B cell (primary cell): ENCODE measurements at regions of chr12 and their contacts with region 1.

Region 1: DNA sequence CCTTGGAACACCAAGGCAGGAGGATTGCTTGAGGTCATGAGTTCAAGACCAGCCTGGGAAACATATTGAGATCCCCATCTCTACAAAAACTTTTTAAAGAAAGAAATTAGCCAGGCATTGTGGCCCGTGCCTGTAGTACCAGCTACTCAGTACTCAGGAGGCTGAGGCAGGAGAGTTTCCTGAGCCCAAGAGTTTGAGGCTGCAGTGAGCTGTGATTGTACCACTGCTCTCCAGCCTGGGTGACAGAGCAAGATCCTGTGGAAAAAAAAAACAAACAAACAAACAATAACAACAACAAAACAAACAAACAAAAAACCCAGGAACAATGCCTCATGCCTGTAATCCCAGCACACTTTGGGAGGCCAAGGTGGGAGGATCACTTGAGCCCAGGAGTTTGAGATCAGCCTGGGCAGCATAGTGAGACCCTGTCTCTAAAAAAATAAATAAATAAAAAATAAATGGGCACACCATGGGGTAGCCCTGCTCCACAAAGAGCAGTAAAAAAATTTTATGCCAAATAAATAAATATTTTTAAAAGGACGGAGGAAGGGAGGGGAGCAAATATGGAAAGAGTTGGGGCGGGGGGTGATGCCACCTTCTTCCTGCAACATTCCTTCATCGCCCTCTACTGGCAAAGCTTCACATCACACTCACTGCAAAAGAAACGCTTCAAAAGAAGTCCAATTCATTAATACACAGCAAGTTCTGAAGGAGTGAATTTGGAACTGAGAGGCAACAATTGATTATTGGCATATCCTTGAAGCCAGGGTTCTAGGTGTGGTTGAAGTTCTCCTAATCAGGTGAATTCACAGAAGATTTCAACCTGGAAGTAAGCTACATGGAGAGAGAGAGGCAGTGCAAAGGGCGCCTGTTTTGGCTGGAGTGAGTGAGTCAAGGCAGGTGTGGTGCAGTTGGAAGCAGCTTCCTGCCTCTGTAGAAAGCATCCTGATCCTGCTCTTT is 8.8 kb upstream of the GNPTAB start:
- DNase-seq: peak; percentile 80
- ATAC-seq: peak; percentile 72
- H3K4me3 ChIP-seq: no peak overlapping the region
- H3K4me3 Mint-ChIP-seq: no peak overlapping the region
- H3K27ac ChIP-seq: peak overlapping the region in 1 of 2 donors; percentile 59
- H3K27ac Mint-ChIP-seq: no peak overlapping the region
- H3K4me1 ChIP-seq: peaks cover 17 to 18% of the 10 kb centered on the region in 2 donors
- H3K4me1 Mint-ChIP-seq: peaks cover 19% of the 10 kb centered on the region
- H3K27me3 ChIP-seq: no peaks in the 10 kb centered on the region
- H3K27me3 Mint-ChIP-seq: no peaks in the 10 kb centered on the region
- CTCF ChIP-seq: peak; percentile 93

Region 2: GRCh38 chr12:101414533-101415119 is 425.0 kb before region 1 on chr12:
- CTCF ChIA-PET with region 1: interaction called, 47 read pairs
- POLR2A ChIA-PET with region 1: no interaction called
- intact Hi-C with region 1: loop called (anchors 1 kb)
- DNase-seq: peak; percentile 52
- ATAC-seq: no peak
- H3K4me3 ChIP-seq: no peak overlapping the region
- H3K4me3 Mint-ChIP-seq: no peak overlapping the region
- H3K27ac ChIP-seq: no peak overlapping the region
- H3K27ac Mint-ChIP-seq: no peak overlapping the region
- H3K4me1 ChIP-seq: no peaks in the 10 kb centered on the region
- H3K4me1 Mint-ChIP-seq: no peaks in the 10 kb centered on the region
- H3K27me3 ChIP-seq: peaks cover 0 to 3% (median 0%) of the 10 kb centered on the region in 4 experiments
- H3K27me3 Mint-ChIP-seq: peaks cover 5% of the 10 kb centered on the region
- CTCF ChIP-seq: peak; percentile 79

Region 3: DNA sequence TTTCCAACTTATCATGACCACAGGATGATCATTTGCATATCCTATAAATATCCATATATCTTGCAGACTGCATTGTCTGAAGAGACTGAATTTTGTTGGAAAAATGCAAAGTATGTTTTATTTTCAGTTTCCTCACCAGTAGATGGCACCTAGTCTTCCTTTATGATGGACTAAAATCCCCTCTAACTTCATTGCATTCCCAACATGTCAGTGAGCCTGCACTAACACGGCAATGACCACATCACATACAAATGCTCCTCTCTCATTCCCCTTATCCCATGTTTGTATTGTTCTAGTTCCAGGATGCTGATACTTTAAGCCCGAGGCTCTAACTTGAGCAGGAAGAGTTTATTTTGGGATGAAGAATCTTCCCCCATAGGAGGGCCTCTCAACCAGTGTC is 269.6 kb before region 1 on chr12:
- CTCF ChIA-PET with region 1: interaction called, 15 read pairs
- POLR2A ChIA-PET with region 1: no interaction called
- intact Hi-C with region 1: loop called (anchors 1 kb)
- DNase-seq: peak; percentile 53
- ATAC-seq: peak; percentile 33
- H3K4me3 ChIP-seq: peak overlapping the region in 1 of 5 experiments; percentile 22
- H3K4me3 Mint-ChIP-seq: peak overlapping the region; percentile 20
- H3K27ac ChIP-seq: no peak overlapping the region
- H3K27ac Mint-ChIP-seq: no peak overlapping the region
- H3K4me1 ChIP-seq: peaks cover 4 to 7% of the 10 kb centered on the region in 2 donors
- H3K4me1 Mint-ChIP-seq: peaks cover 4% of the 10 kb centered on the region
- H3K27me3 ChIP-seq: peaks cover 0 to 3% (median 0%) of the 10 kb centered on the region in 4 experiments
- H3K27me3 Mint-ChIP-seq: peaks cover 3% of the 10 kb centered on the region
- CTCF ChIP-seq: peak; percentile 59

Region 4: GRCh38 chr12:101759396-101760047 is 80.1 kb before region 1 on chr12:
- CTCF ChIA-PET with region 1: interaction called, 21 read pairs
- POLR2A ChIA-PET with region 1: no interaction called
- intact Hi-C with region 1: no loop called
- DNase-seq: peak; percentile 62
- ATAC-seq: peak; percentile 72
- H3K4me3 ChIP-seq: no peak overlapping the region
- H3K4me3 Mint-ChIP-seq: no peak overlapping the region
- H3K27ac ChIP-seq: no peak overlapping the region
- H3K27ac Mint-ChIP-seq: no peak overlapping the region
- H3K4me1 ChIP-seq: peaks cover 3% of the 10 kb centered on the region in 2 donors
- H3K4me1 Mint-ChIP-seq: peaks cover 20% of the 10 kb centered on the region
- H3K27me3 ChIP-seq: no peaks in the 10 kb centered on the region
- H3K27me3 Mint-ChIP-seq: no peaks in the 10 kb centered on the region
- CTCF ChIP-seq: peak; percentile 89

Region 5: GRCh38 chr12:101780599-101780998 is 59.0 kb before region 1 on chr12:
- CTCF ChIA-PET with region 1: interaction called, 31 read pairs
- POLR2A ChIA-PET with region 1: no interaction called
- intact Hi-C with region 1: no loop called
- DNase-seq: no peak
- ATAC-seq: no peak
- H3K4me3 ChIP-seq: no peak overlapping the region
- H3K4me3 Mint-ChIP-seq: no peak overlapping the region
- H3K27ac ChIP-seq: no peak overlapping the region
- H3K27ac Mint-ChIP-seq: peak overlapping the region; percentile 64
- H3K4me1 ChIP-seq: peaks cover 5 to 7% of the 10 kb centered on the region in 2 donors
- H3K4me1 Mint-ChIP-seq: peaks cover 18% of the 10 kb centered on the region
- H3K27me3 ChIP-seq: no peaks in the 10 kb centered on the region
- H3K27me3 Mint-ChIP-seq: no peaks in the 10 kb centered on the region
- CTCF ChIP-seq: no peak

Region 6: GRCh38 chr12:101854747-101855146 is 15.1 kb after region 1 on chr12:
- CTCF ChIA-PET with region 1: interaction called, 10 read pairs
- POLR2A ChIA-PET with region 1: no interaction called
- intact Hi-C with region 1: no loop called
- DNase-seq: peak; percentile 50
- ATAC-seq: peak; percentile 76
- H3K4me3 ChIP-seq: no peak overlapping the region
- H3K4me3 Mint-ChIP-seq: no peak overlapping the region
- H3K27ac ChIP-seq: no peak overlapping the region
- H3K27ac Mint-ChIP-seq: no peak overlapping the region
- H3K4me1 ChIP-seq: peaks cover 16% of the 10 kb centered on the region in 2 donors
- H3K4me1 Mint-ChIP-seq: peaks cover 36% of the 10 kb centered on the region
- H3K27me3 ChIP-seq: no peaks in the 10 kb centered on the region
- H3K27me3 Mint-ChIP-seq: no peaks in the 10 kb centered on the region
- CTCF ChIP-seq: no peak

Region 7: GRCh38 chr12:101945369-101946231 is 106.0 kb after region 1 on chr12:
- CTCF ChIA-PET with region 1: no interaction called
- POLR2A ChIA-PET with region 1: no interaction called
- intact Hi-C with region 1: no loop called
- DNase-seq: no peak
- ATAC-seq: no peak
- H3K4me3 ChIP-seq: no peak overlapping the region
- H3K4me3 Mint-ChIP-seq: no peak overlapping the region
- H3K27ac ChIP-seq: no peak overlapping the region
- H3K27ac Mint-ChIP-seq: no peak overlapping the region
- H3K4me1 ChIP-seq: peaks cover 17 to 18% of the 10 kb centered on the region in 2 donors
- H3K4me1 Mint-ChIP-seq: peaks cover 16% of the 10 kb centered on the region
- H3K27me3 ChIP-seq: no peaks in the 10 kb centered on the region
- H3K27me3 Mint-ChIP-seq: no peaks in the 10 kb centered on the region
- CTCF ChIP-seq: no peak

Region 8: DNA sequence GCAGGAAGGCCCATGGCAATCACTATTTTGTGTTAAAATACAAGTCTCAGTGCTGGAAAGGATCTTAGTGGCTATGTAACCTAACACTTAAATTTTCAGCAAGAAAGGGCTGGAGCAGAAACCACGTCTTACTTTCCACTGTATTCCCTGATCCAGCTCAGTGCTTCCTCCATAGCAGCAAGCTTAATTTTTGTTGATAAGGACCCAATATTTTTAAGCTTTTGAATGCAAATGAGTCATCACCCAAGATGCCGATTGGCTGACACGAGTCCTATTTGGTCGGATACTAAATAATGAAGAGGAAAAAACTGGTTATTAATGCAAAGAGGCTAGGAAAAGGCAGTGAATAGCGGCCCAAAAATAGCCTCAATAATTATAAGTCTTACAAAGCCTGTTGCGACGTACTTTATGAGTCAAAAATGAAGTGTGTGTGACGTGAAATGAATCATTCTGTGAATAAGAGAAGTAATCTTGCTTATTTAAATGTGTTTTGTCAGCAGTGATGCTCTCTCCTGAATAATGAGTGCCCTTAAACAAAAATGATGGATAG is 687.6 kb after region 1 on chr12:
- CTCF ChIA-PET with region 1: no interaction called
- POLR2A ChIA-PET with region 1: no interaction called
- intact Hi-C with region 1: no loop called
- DNase-seq: no peak
- ATAC-seq: no peak
- H3K4me3 ChIP-seq: no peak overlapping the region
- H3K4me3 Mint-ChIP-seq: no peak overlapping the region
- H3K27ac ChIP-seq: no peak overlapping the region
- H3K27ac Mint-ChIP-seq: no peak overlapping the region
- H3K4me1 ChIP-seq: no peaks in the 10 kb centered on the region
- H3K4me1 Mint-ChIP-seq: no peaks in the 10 kb centered on the region
- H3K27me3 ChIP-seq: no peaks in the 10 kb centered on the region
- H3K27me3 Mint-ChIP-seq: peaks cover 15% of the 10 kb centered on the region
- CTCF ChIP-seq: no peak